Posterior cingulate gyrus (tissue), 11 donors: ENCODE measurements at regions of chr2 and their contacts with region 1.

Region 1: GRCh38 chr2:69724540-69725159 is 17.3 kb upstream of the ANXA4 start:
- DNase-seq: peak; percentile 78 to 97 (median 93)

Region 2: DNA sequence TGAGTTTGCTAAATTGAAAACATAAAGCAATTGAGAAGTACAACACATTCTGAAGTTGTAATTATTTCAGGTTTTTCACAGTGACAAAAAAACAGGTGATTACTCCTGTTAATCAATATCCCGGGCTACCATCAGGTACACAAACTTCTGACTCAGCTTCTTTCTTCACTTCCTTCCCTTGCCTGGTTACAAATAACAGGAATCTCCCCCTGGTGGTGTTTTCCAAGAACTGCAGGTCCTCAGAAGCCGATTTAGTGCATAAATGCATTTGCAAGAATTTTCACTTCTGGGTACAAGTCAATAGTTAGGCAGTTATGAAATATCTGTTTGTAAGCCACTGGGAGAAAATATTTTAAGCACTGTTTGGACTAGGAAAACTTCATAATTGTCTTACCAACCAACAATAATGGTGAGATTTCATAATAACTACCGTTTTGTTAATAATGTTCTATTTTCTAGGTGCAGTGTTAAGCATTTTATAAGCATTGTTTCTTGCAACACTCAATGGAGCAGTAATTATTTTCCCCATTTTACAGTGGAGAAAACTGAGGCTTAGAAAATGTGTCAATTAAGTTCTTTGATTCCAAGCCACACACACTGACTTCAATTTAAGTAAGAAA is 92.4 kb after region 1 on chr2:
- intact Hi-C with region 1: loop called (anchors 1 kb)
- DNase-seq: peak in 7 of 10 donors; percentile 56 to 90 (median 76)

Region 3: DNA sequence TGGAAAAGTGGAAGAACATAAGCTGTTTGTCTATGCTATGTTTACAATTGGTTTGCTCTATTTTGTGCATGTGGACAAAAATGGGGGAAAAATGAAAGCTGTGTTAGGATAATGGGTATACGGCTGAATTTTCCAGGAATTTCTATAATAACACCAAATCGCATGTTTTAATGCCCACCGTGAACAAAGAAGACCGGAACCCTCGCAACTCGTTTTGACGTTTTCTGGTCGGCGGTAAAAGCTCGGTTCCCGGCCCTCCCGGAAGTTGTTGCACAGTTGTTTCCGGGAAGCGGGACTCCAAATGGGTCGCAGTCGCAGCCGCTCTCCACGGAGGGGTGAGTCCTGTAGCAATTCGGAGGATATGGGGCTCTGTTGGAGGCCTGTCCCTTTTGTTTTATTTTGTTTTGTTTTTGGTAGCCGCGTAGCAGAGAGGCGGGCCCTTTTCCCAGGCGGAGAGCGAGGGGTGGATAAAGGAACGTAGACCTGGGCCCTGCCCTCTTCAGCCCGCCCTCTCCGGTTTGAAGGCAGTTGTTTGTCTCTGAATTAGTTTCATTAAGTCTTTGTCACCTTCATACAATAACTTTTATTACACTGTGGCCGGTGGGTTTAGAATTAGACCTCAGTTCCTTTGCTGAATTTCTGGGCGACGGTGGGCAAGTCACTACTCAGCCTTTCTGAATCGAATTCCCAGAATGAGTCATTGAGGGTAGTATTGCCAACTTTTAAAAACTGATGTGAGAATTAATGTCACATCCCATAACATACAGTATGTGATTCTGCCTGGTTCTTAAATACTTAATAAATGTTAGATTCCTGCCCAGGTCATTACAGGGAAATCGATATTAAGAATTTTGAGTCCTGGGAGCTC is 169.3 kb after region 1 on chr2 and contains the start of gene SNRNP27:
- intact Hi-C with region 1: loop called (anchors 10 kb)
- DNase-seq: peak; percentile 77 to 97 (median 83)